Activated naive CD4-positive, alpha-beta T cell treated with anti-CD3 and anti-CD28 coated beads, Interleukin-2, amount 10 ng/mL, durations not matched to agents 7 days and 5 days (primary cell): ENCODE measurements at regions of chr21 and their contacts with region 1.

Region 1: GRCh38 chr21:34603002-34603709 is 11.8 kb downstream of the RCAN1 start:
- DNase-seq: peak; percentile 72
- H3K4me3 Mint-ChIP-seq: no peak overlapping the region
- H3K27ac Mint-ChIP-seq: no peak overlapping the region
- H3K4me1 Mint-ChIP-seq: no peaks in the 10 kb centered on the region
- H3K27me3 Mint-ChIP-seq: peaks cover 14% of the 10 kb centered on the region

Region 2: GRCh38 chr21:34510148-34511142 is 92.7 kb before region 1 on chr21:
- CTCF ChIA-PET with region 1: interaction called, 16 read pairs
- DNase-seq: peak; percentile 50
- H3K4me3 Mint-ChIP-seq: no peak overlapping the region
- H3K27ac Mint-ChIP-seq: no peak overlapping the region
- H3K4me1 Mint-ChIP-seq: no peaks in the 10 kb centered on the region
- H3K27me3 Mint-ChIP-seq: no peaks in the 10 kb centered on the region

Region 3: GRCh38 chr21:34517491-34518245 is 85.5 kb before region 1 on chr21:
- CTCF ChIA-PET with region 1: interaction called, 12 read pairs
- DNase-seq: peak; percentile 40
- H3K4me3 Mint-ChIP-seq: no peak overlapping the region
- H3K27ac Mint-ChIP-seq: no peak overlapping the region
- H3K4me1 Mint-ChIP-seq: peaks cover 13% of the 10 kb centered on the region
- H3K27me3 Mint-ChIP-seq: no peaks in the 10 kb centered on the region

Region 4: DNA sequence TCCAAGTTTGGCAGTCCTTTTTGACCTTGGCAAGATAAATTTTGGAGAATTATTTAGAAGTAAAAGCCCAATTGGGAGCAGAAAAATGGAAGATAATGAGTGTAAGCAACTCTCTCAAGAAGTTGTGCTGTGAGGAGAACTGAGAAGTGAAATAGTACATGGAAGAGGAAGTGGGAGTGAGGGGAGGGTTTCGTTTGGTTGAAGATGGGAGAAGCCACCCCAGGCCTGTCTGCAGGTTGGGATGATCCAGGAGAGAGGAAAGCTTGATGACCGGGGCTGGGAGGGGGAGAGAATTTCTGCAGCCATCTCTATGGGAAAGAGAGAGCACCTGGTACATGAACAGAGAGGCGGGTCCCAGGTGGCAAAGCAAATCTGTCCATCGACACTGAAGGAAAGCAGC is 20.4 kb after region 1 on chr21:
- CTCF ChIA-PET with region 1: interaction called, 11 read pairs
- DNase-seq: no peak
- H3K4me3 Mint-ChIP-seq: no peak overlapping the region
- H3K27ac Mint-ChIP-seq: no peak overlapping the region
- H3K4me1 Mint-ChIP-seq: no peaks in the 10 kb centered on the region
- H3K27me3 Mint-ChIP-seq: peaks cover 40% of the 10 kb centered on the region